Activated CD8-positive, alpha-beta T cell treated with anti-CD3 and anti-CD28 coated beads for 36 hours (primary cell): ENCODE measurements at regions of chr7 and their contacts with region 1.

Region 1: DNA sequence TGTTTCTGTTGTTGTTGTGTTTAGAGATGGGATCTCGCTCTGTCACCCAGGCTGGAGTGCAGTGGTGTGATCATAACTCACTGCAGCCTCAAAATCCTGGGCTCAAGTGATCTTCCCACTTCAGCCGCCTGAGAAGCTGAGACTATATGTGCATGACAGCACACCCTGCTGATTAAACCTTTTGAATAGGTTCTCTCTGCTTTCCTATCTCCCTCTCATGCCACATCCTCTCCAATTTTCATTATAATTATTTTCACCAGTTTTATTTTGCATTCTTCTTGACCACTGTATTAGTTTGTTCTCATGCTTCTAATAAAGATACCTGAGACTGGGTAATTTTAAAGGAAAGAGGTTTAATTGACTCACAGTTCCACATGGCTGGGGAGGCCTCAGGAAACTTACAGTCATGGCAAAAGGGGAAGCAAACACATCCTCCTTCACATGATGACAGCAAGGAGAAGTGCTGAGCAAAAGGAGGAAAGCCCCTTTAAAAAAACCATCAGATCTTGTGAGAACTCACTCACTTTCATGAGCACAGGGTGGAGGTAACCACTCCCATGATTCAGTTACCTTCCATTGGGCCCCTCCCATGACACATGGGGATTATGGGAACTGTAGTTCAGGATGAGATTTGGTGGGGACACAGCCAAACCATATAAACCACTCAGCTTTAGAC is 12.9 kb downstream of the AGK start:
- DNase-seq: peak; percentile 69
- ATAC-seq: peak; percentile 97
- H3K4me3 Mint-ChIP-seq: no peak overlapping the region
- H3K27ac Mint-ChIP-seq: peak overlapping the region; percentile 88
- H3K4me1 Mint-ChIP-seq: peaks cover 65% of the 10 kb centered on the region
- H3K27me3 Mint-ChIP-seq: no peaks in the 10 kb centered on the region
- CTCF ChIP-seq: no peak

Region 2: DNA sequence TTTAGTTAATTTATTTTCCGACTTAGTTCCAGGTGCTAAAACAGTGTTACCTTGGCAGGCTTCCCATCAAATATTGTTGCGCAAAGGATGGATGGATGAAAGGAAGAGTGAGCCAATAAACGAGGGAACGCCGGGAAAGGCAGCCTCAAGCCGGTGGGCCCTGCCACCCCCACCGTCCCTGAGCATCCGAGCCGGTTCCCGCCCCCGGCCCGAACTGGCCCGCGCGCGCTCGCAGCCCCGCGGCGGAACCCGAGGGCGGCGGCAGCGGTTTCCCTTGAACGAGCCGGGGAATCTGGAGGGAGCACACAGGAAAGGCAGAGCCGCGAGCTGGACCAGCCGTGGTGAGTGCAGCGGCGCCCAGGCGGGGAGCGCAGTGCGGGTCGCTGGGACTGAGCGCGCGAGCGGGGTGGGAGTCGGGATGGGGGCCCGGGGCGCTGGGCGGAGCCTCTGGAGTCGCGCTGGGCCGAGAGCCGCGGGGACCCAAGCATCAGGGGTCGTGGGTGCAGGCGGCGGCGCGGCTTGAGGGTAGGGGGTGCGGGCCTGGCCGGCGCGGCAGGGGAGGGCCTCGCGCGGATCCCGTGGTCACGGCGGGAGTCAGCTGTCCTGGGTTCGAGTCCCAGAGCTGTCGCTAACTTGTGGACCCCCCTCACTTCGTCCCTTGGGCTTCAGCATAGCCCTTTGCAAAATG is 12.9 kb before region 1 on chr7 and contains the start of gene AGK:
- CTCF ChIA-PET with region 1: no interaction called
- POLR2A ChIA-PET with region 1: interaction called, 15 read pairs
- intact Hi-C with region 1: no loop called
- DNase-seq: peak; percentile 78
- ATAC-seq: peak; percentile 95
- H3K4me3 Mint-ChIP-seq: peak within 1 kb of the TSS; percentile 85
- H3K27ac Mint-ChIP-seq: peak within 1 kb of the TSS; percentile 91
- H3K4me1 Mint-ChIP-seq: peaks cover 37% of the 10 kb centered on the region
- H3K27me3 Mint-ChIP-seq: no peaks in the 10 kb centered on the region
- CTCF ChIP-seq: no peak
- total RNA-seq, gene AGK: 70.1 to 73.7 TPM